HEK293 (cell line): ENCODE measurements at regions of chr12 and their contacts with region 1.

Region 1: DNA sequence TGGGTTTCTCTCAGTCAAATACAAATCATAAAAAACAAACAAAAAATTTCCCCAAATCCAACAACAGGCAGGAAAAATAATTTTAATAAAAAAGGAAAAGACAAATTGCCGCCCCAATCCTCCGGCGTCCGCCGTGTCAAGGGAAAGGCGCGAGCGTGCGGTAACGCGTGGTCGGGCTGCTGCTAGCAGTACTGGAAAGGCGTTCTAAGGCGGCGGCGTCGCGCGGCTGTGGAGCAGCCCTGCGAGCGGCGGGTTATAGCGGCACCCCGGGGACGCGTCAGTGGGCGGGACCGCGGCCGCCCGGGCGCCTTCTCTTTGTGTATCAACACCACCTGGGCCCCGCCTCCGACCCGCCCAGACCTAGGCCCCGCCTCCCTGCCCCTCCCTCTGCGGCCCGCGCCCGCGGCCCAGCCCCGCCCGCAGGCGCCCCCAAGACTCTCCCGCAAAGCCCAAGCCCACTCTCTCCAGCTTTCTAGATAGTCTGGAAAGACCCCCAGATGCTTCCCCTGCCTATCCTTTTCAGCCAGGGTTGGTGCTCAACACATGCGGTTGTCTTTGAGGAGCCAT is at the start of gene SLC38A2:
- H3K4me3 ChIP-seq: peak within 1 kb of the TSS; percentile 96
- H3K27ac ChIP-seq: peak within 1 kb of the TSS; percentile 97
- H3K4me1 ChIP-seq: peaks cover 17% of the 10 kb centered on the region
- CTCF ChIP-seq: 0 out of 2 replicates have a peak, but pooled peaks have one; percentile 3

Region 2: DNA sequence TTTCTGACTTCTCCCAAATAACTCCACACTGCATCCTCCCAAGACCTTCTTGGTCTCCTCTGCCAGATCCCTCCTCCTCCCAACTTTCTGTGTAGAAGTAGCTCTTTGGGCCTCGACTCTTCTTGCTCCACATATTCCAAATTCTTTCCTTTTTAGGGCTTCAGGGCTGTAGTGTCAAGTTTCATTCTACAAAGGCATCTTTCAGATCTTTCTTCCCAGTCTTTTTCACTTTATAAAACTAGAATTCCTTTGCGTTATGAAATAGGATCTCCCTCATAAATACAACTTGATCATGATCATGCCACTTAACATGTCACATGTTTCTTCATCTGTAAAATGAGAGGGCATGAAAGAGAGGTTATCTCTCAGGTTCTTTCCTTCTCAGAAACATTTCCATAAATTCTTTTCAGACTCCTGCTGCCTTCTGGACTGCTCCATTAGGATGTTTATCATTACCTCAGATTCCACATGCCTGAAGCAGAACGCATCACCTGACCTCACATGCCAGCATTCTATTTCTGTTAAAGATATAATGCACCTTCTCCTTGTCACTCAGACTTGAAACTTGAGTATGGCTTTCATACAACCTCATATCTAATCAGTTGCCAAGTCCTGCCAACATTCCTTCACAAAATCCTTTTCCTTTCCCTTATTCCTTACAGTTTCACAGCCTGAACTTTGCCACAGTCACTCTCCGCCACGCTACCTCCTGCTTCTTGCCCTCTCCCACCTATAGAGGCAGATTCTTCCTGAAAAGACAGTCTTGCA is 112.3 kb before region 1 on chr12:
- CTCF ChIA-PET with region 1: no interaction called
- POLR2A ChIA-PET with region 1: no interaction called
- H3K4me3 ChIP-seq: no peak overlapping the region
- H3K27ac ChIP-seq: no peak overlapping the region
- H3K4me1 ChIP-seq: peaks cover 38% of the 10 kb centered on the region
- CTCF ChIP-seq: no peak

Region 3: GRCh38 chr12:46357438-46358324 is 14.9 kb before region 1 on chr12:
- CTCF ChIA-PET with region 1: interaction called, 3 read pairs
- POLR2A ChIA-PET with region 1: interaction called, 13 read pairs
- H3K4me3 ChIP-seq: no peak overlapping the region
- H3K27ac ChIP-seq: no peak overlapping the region
- H3K4me1 ChIP-seq: no peaks in the 10 kb centered on the region
- CTCF ChIP-seq: no peak

Region 4: DNA sequence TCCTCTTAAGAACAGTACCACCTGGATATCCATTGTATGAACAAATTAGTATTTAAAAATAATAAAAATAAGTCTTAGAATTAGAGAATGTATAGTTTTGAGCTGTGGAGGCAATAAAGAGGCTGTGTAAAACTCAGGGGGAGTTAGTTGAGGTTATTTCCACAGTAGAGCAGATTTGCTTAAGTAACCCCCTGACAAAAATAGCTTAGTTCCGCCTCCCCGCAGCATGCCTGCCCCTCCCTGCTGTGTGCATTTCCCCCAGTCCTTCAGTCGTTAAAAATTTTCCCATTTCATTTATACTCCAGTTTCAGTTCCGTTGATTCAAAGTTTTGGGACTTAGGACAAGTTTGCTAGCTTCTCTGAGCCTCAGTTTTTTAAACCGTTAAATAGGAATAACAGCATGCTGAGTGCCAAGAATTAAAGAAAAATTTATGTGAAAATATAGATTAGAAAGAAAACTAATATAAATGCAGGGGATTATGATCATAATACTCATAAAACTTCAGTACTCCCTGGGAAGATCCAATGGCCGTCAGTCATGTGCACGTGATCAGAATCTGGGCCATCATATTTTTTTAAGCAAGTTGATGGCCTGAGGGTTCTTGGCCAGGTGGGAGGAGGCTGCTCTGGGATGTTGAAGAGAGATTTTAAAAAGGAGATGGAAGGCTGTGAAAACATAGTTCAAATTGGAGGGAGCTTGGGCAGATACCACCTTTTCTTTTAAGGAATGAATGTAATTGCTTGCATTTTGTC is 14.4 kb after region 1 on chr12:
- CTCF ChIA-PET with region 1: no interaction called
- POLR2A ChIA-PET with region 1: interaction called, 11 read pairs
- H3K4me3 ChIP-seq: no peak overlapping the region
- H3K27ac ChIP-seq: no peak overlapping the region
- H3K4me1 ChIP-seq: peaks cover 35% of the 10 kb centered on the region
- CTCF ChIP-seq: no peak